PC-3 (cell line): ENCODE measurements at regions of chr2 and their contacts with region 1.

Region 1: DNA sequence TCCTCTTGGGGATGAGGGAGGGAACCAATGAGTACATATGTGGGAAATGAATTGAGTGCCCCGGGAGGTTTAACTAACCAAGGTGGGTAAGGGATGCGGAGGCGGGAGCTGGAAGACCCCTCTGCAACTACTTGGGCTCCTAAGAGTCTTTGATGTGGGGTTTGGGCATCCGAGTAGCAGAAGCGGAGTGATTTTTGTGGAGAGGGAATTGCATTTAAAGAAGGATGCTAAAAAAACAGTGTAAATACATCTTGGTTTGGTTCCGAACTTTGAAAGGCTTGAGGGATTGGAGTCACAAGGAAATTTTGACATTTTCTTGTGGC is 215.7 kb downstream of the MCFD2 start:
- DNase-seq: peak; percentile 8
- ATAC-seq: no peak
- H3K4me3 ChIP-seq: peak overlapping the region; percentile 98
- H3K27ac ChIP-seq: no peak overlapping the region
- H3K4me1 ChIP-seq: peaks cover 27% of the 10 kb centered on the region; the same call in 1 of the 2 replicates
- H3K27me3 ChIP-seq: no peaks in the 10 kb centered on the region
- CTCF ChIP-seq: no peak

Region 2: GRCh38 chr2:46601328-46601963 is 98.4 kb before region 1 on chr2:
- CTCF ChIA-PET with region 1: no interaction called
- POLR2A ChIA-PET with region 1: no interaction called
- intact Hi-C with region 1: no loop called
- DNase-seq: peak; percentile 49
- ATAC-seq: peak; percentile 29; the same call in 1 of the 2 replicates
- H3K4me3 ChIP-seq: no peak overlapping the region
- H3K27ac ChIP-seq: no peak overlapping the region
- H3K4me1 ChIP-seq: no peaks in the 10 kb centered on the region
- H3K27me3 ChIP-seq: no peaks in the 10 kb centered on the region
- CTCF ChIP-seq: peak; percentile 73

Region 3: DNA sequence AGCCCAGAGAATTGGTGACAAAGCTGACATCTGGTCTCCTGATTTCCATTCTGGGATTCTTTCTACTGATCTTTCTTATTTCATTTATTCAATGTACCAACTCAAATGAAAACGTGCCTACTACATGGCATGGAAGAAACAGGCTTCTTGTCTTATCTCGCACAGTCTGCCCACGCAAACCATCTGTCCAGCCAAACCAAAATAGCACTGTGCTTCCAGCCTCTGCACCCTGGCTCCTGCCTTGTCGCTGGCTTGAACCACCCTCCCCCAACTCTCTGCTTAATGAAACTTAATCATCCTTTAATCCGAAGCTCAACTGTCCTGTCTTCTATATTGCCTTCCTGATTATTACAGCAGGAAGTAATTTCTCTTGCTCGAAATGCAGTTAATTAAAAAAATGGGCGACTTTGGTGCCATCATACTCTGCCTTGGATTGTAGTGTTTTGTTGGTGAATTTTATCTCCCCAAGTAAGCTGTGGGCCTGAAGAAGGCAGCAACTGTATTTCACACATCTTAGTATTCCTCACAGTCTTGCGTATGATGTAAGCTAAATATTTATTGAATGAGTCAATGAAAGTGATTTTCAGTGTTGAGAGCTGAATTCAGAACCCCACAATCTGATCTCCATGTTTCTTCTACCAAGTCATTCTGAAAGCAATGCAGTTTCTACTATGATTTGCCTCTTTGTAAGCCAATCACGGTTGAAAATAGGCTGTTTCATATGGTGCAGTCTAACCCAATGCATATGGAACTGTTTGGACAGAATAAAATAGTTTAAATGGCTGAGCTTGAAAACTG is 29.7 kb before region 1 on chr2:
- CTCF ChIA-PET with region 1: no interaction called
- POLR2A ChIA-PET with region 1: no interaction called
- intact Hi-C with region 1: no loop called
- DNase-seq: peak; percentile 34
- ATAC-seq: no peak
- H3K4me3 ChIP-seq: no peak overlapping the region
- H3K27ac ChIP-seq: no peak overlapping the region
- H3K4me1 ChIP-seq: peaks cover 6% of the 10 kb centered on the region
- H3K27me3 ChIP-seq: no peaks in the 10 kb centered on the region
- CTCF ChIP-seq: no peak

Region 4: GRCh38 chr2:46749042-46749531 is 49.2 kb after region 1 on chr2:
- CTCF ChIA-PET with region 1: no interaction called
- POLR2A ChIA-PET with region 1: no interaction called
- intact Hi-C with region 1: loop called (anchors 5 kb)
- DNase-seq: peak; percentile 90
- ATAC-seq: peak; percentile 99
- H3K4me3 ChIP-seq: no peak overlapping the region
- H3K27ac ChIP-seq: peak overlapping the region; percentile 85
- H3K4me1 ChIP-seq: peaks cover 33% of the 10 kb centered on the region
- H3K27me3 ChIP-seq: no peaks in the 10 kb centered on the region
- CTCF ChIP-seq: no peak

Region 5: GRCh38 chr2:46776687-46777327 is 76.9 kb after region 1 on chr2:
- CTCF ChIA-PET with region 1: no interaction called
- POLR2A ChIA-PET with region 1: no interaction called
- intact Hi-C with region 1: loop called (anchors 5 kb)
- DNase-seq: peak; percentile 77
- ATAC-seq: peak; percentile 60
- H3K4me3 ChIP-seq: no peak overlapping the region
- H3K27ac ChIP-seq: no peak overlapping the region
- H3K4me1 ChIP-seq: peaks cover 29% of the 10 kb centered on the region
- H3K27me3 ChIP-seq: no peaks in the 10 kb centered on the region
- CTCF ChIP-seq: peak; percentile 91

Region 6: GRCh38 chr2:47486841-47487497 is 787.1 kb after region 1 on chr2:
- CTCF ChIA-PET with region 1: no interaction called
- POLR2A ChIA-PET with region 1: no interaction called
- intact Hi-C with region 1: no loop called
- DNase-seq: no peak
- ATAC-seq: no peak
- H3K4me3 ChIP-seq: no peak overlapping the region
- H3K27ac ChIP-seq: no peak overlapping the region
- H3K4me1 ChIP-seq: peaks cover 12% of the 10 kb centered on the region
- H3K27me3 ChIP-seq: no peaks in the 10 kb centered on the region
- CTCF ChIP-seq: no peak